ENCODE measurements at regions of chr9 and their contacts with region 1.

Region 1: DNA sequence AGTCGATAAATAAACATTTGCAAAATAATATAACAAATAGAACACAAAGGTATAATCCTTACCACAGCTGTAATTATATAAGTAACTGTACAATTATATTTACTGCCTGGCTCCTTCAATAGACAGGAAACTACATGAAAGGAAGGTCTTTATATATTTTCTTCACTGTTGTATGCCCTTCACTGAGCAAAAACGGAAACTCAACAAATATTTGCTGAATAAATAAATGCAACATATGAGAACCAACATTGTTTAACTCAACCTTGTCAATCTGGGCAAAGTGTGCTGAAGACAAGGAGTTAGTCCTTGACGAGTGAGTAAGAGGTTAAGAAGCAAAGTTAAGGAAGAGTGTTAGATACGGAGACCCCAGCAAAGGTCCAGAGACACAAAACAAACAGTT is 22.6 kb downstream of the PSMD5 start:
- DNase-seq: no peak
- ATAC-seq: peak; percentile 50
- H3K4me3 ChIP-seq: no peak overlapping the region
- H3K27ac ChIP-seq: no peak overlapping the region
- H3K4me1 ChIP-seq: peaks cover 13% of the 10 kb centered on the region
- H3K27me3 ChIP-seq: no peaks in the 10 kb centered on the region
- CTCF ChIP-seq: no peak
- EP300 ChIP-seq: no peak
- POLR2A ChIP-seq: no peak
- RAD21 ChIP-seq: no peak

Region 2: GRCh38 chr9:120755827-120756434 is 64.2 kb before region 1 on chr9:
- CTCF ChIA-PET with region 1: no interaction called
- POLR2A ChIA-PET with region 1: no interaction called
- in situ Hi-C with region 1: no loop called
- intact Hi-C with region 1: no loop called
- DNase-seq: peak; percentile 39
- ATAC-seq: peak; percentile 79
- H3K4me3 ChIP-seq: no peak overlapping the region
- H3K27ac ChIP-seq: no peak overlapping the region
- H3K4me1 ChIP-seq: no peaks in the 10 kb centered on the region
- H3K27me3 ChIP-seq: no peaks in the 10 kb centered on the region
- CTCF ChIP-seq: peak; percentile 90
- EP300 ChIP-seq: no peak
- POLR2A ChIP-seq: no peak
- RAD21 ChIP-seq: peak; percentile 90

Region 3: DNA sequence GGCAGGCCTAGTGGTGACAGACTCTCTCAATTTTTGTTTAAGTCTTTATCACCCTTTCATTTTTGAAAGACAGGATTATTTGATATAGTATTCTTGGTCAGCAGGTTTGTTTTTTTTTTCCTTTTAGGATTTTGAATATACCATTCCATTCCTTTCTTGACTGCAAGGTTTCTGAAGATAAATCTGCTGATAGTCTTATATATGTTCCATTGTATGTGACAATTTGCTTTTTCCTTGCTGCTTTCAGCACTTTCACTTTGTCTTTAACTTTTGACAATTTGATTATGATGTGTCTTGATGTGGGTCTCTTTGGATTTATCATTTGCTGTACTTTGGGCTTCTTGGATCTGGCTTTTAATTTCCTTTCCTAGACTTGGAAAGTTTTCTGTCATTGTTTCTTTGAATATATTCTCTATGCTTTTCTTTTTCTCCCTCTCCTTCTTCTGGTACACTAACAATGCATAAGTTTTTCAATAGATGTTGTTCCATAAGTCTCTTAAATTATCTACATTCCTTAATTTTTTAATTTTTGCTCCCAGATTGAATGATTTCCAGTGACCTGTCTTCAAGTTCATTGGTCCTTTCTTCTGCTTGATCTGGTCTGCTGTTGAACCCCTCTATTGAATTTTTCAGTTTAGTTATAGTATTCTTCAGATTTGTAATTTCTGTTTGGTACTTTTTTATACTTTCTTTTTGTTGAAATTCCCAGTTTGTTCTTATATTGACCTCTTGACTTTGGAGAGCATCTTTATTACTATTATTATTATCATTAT is 12.3 kb before region 1 on chr9:
- CTCF ChIA-PET with region 1: no interaction called
- POLR2A ChIA-PET with region 1: no interaction called
- in situ Hi-C with region 1: no loop called
- intact Hi-C with region 1: loop called (anchors 1 kb)
- DNase-seq: no peak
- ATAC-seq: no peak
- H3K4me3 ChIP-seq: no peak overlapping the region
- H3K27ac ChIP-seq: no peak overlapping the region
- H3K4me1 ChIP-seq: no peaks in the 10 kb centered on the region
- H3K27me3 ChIP-seq: no peaks in the 10 kb centered on the region
- CTCF ChIP-seq: no peak
- EP300 ChIP-seq: no peak
- POLR2A ChIP-seq: no peak
- RAD21 ChIP-seq: no peak

Region 4: GRCh38 chr9:120856700-120857099 is 36.6 kb after region 1 on chr9:
- CTCF ChIA-PET with region 1: no interaction called
- POLR2A ChIA-PET with region 1: no interaction called
- in situ Hi-C with region 1: no loop called
- intact Hi-C with region 1: no loop called
- DNase-seq: no peak
- ATAC-seq: no peak
- H3K4me3 ChIP-seq: no peak overlapping the region
- H3K27ac ChIP-seq: no peak overlapping the region
- H3K4me1 ChIP-seq: peaks cover 13% of the 10 kb centered on the region
- H3K27me3 ChIP-seq: no peaks in the 10 kb centered on the region
- CTCF ChIP-seq: no peak
- EP300 ChIP-seq: no peak
- POLR2A ChIP-seq: no peak
- RAD21 ChIP-seq: no peak